ENCODE measurements at regions of chr5 and their contacts with region 1.

Region 1: GRCh38 chr5:160119142-160119904 is at the start of gene PWWP2A:
- DNase-seq: peak; percentile 99 to 100
- H3K4me3 ChIP-seq: peak within 1 kb of the TSS; percentile 77 to 99
- H3K27ac ChIP-seq: peak within 1 kb of the TSS; percentile 98 to 99
- H3K4me1 ChIP-seq: peaks cover 0 to 21% (median 9%) of the 10 kb centered on the region in 4 donors
- H3K27me3 ChIP-seq: no peaks in the 10 kb centered on the region
- CTCF ChIP-seq: no peak

Region 2: DNA sequence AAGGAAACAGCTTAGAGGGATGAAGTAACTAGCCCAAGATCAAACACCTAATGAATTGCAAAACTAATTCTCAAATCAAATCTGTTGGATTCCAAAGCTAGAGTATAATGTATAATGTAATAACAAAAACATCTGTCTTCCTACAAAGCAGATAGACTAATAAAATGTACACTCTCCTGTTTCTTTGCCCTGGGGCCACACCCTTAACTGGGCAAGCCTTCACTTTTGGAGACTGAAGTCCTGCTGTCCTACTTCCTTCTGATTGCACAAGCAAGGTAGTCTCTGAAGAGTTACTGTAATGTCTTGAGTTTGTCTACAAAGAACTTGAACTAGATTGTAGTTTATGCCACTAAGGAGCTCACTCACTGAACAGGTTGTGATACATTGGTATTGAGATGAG is 107.9 kb before region 1 on chr5:
- intact Hi-C with region 1: loop called (anchors 10 kb)
- DNase-seq: no peak
- H3K4me3 ChIP-seq: no peak overlapping the region
- H3K27ac ChIP-seq: no peak overlapping the region
- H3K4me1 ChIP-seq: peaks cover 0 to 25% (median 17%) of the 10 kb centered on the region in 4 donors
- H3K27me3 ChIP-seq: no peaks in the 10 kb centered on the region
- CTCF ChIP-seq: no peak

Region 3: DNA sequence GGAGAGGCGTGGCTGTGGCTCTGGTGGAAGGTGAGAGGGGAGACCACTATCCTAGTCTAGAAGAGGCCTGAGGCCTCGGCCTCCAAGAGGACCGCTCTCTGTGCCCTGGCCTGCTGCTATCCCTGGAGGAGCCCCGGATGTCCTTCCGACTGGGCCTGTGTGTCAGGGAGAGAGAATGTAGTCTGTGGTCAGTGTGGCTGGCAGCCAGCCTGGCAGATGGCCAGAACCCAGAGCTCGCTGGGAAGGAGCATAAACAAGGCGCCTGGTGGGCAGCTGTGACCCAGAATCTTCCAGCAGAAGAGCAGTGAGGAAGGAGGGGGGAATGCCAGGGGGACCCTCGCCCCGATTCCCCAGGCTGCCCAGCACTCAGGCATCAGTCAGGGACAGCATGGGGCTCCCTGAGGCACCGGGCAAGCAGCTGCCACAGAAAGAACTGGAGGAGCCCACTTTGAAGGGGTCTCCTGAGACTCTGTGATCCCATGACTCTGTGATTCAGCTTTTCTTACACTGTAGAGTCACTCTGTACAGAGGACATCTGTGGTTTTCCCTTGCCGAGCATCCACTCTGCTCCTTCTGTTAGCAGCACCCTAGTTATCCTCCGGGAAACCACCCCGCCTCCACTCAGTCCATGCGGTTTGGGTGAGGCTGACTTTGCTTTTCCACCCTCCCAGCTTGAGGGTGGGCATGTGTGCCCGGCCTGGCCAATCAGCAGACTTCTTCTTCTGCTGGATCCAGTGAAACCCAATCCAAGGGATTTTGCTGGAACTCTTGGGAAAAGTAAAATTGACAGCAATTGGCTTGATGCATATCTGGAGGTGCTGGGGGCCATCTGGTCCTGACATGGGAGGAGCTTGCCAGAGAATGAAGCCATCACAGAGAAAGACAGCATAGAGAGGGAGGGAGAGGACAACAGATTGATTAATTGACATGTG is 46.1 kb after region 1 on chr5:
- intact Hi-C with region 1: loop called (anchors 5 kb)
- DNase-seq: peak; percentile 90 to 96
- H3K4me3 ChIP-seq: peak overlapping the region; percentile 24 to 46
- H3K27ac ChIP-seq: peak overlapping the region; percentile 90 to 91
- H3K4me1 ChIP-seq: peaks cover 0 to 40% (median 20%) of the 10 kb centered on the region in 4 donors
- H3K27me3 ChIP-seq: no peaks in the 10 kb centered on the region
- CTCF ChIP-seq: peak in 1 of 2 experiments; percentile 15